ENCODE measurements at regions of chr12 and their contacts with region 1.

Region 1: GRCh38 chr12:13282861-13283260 is 86.3 kb downstream of the EMP1 start:
- DNase-seq: no peak
- H3K4me3 ChIP-seq: no peak overlapping the region
- H3K27ac ChIP-seq: no peak overlapping the region
- H3K4me1 ChIP-seq: no peaks in the 10 kb centered on the region
- H3K27me3 ChIP-seq: no peaks in the 10 kb centered on the region
- CTCF ChIP-seq: no peak
- POLR2A ChIP-seq: no peak

Region 2: DNA sequence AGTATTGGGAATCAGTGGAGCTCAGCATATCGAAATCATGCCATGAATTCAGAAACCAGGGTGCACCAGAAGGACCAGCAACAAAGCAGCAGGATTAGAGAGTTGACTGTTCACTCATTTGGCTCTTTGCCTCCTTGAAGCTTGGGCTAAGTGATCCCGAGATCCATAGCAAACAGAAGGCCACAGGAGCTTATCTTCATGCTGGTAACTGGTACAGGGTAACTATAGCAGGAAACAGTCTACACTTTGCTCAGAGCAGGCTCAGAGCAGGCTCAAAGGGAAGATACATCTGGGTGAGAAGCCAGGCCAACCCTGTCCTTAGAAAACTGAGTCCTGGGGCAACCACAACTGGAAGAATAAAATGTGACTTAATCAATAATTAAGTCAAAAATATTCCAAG is 587.4 kb after region 1 on chr12:
- intact Hi-C with region 1: loop called (anchors 5 kb)
- DNase-seq: no peak
- H3K4me3 ChIP-seq: no peak overlapping the region
- H3K27ac ChIP-seq: no peak overlapping the region
- H3K4me1 ChIP-seq: no peaks in the 10 kb centered on the region
- H3K27me3 ChIP-seq: no peaks in the 10 kb centered on the region
- CTCF ChIP-seq: no peak
- POLR2A ChIP-seq: no peak